ENCODE measurements at regions of chr7 and their contacts with region 1.

Region 1: GRCh38 chr7:80047856-80048459 is 86.7 kb upstream of the GNAI1 start:
- DNase-seq: peak; percentile 34
- ATAC-seq: peak; percentile 82
- H3K4me3 ChIP-seq: no peak overlapping the region
- H3K27ac ChIP-seq: no peak overlapping the region
- H3K4me1 ChIP-seq: no peaks in the 10 kb centered on the region
- H3K27me3 ChIP-seq: no peaks in the 10 kb centered on the region
- CTCF ChIP-seq: peak; percentile 65
- POLR2A ChIP-seq: no peak
- RAD21 ChIP-seq: peak; percentile 69

Region 2: DNA sequence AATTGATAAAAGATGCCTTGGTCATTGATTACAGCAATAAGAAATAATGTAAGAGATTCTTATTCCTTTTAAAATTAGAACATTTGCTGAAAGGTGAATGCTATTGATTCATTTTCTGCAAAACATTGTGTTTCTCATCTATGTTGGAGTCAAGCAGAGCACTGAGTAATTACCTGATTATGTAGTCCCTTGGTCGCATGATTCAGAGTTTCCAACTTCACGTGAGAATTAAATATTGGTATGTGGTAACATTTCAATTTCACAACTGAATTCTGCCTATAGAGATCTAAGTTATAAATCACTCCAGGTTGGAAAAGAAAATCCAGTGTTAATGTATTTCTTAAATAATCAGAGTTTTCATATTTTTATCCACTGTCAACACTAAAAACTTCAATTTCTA is 1548.0 kb before region 1 on chr7:
- CTCF ChIA-PET with region 1: no interaction called
- POLR2A ChIA-PET with region 1: no interaction called
- dilution Hi-C with region 1: no loop called
- in situ Hi-C with region 1: loop called (anchors 10 kb)
- intact Hi-C with region 1: no loop called
- DNase-seq: peak; percentile 44
- ATAC-seq: no peak
- H3K4me3 ChIP-seq: no peak overlapping the region
- H3K27ac ChIP-seq: no peak overlapping the region
- H3K4me1 ChIP-seq: no peaks in the 10 kb centered on the region
- H3K27me3 ChIP-seq: no peaks in the 10 kb centered on the region
- CTCF ChIP-seq: no peak
- POLR2A ChIP-seq: no peak
- RAD21 ChIP-seq: no peak

Region 3: DNA sequence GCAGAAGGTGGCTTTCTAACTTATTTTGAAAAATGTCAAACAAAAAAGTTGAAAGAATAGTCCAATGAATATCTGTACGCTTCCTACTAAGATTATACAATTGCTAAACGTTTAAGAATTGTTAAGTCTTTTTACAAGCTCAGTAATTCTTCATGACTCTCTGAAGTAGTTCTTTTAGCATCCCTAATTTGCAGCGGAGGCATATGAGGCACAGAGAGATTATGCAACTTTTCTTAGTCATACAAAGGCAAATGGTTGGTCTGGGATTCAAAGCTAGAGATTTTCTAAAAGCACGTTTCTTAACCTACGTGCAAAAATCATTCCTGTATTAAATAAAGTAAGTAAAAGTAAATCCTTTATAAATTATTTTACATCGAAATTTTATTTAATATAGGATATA is 848.7 kb before region 1 on chr7:
- CTCF ChIA-PET with region 1: no interaction called
- POLR2A ChIA-PET with region 1: no interaction called
- dilution Hi-C with region 1: no loop called
- in situ Hi-C with region 1: no loop called
- intact Hi-C with region 1: loop called (anchors 5 kb)
- DNase-seq: peak; percentile 69
- ATAC-seq: no peak
- H3K4me3 ChIP-seq: no peak overlapping the region
- H3K27ac ChIP-seq: no peak overlapping the region
- H3K4me1 ChIP-seq: peaks cover 4% of the 10 kb centered on the region
- H3K27me3 ChIP-seq: no peaks in the 10 kb centered on the region
- CTCF ChIP-seq: no peak
- POLR2A ChIP-seq: no peak
- RAD21 ChIP-seq: no peak

Region 4: DNA sequence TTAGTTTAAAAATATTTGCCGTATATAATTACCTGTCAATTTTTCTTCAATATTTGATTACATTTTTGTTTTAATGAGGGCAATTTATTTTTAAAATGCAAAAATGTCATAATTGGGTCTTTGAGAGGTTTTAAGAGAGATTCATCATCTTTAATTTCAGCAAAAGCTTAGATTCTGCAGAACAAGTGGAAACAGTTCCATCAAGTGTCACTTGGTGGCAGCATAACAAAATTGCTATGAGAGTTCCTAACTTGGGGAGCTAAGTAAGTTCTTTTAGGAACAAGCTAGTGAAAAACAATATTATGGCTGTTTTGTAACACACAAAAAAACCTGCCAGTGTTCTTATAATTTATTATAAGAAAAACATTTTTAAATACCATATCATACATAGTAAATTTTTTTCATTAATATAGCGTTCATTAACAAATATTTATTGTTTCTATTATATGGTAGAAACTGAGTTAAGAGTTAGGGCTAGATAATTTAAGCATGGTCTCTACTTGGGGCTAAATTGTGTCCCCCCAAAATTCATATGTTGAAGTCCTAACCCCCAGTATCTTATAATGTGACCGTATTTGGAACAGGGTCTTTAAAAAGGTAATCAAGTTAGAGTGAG is 749.7 kb before region 1 on chr7:
- CTCF ChIA-PET with region 1: interaction called, 8 read pairs
- POLR2A ChIA-PET with region 1: no interaction called
- dilution Hi-C with region 1: no loop called
- in situ Hi-C with region 1: loop called (anchors 5 kb)
- intact Hi-C with region 1: loop called (anchors 5 kb)
- DNase-seq: peak; percentile 79
- ATAC-seq: peak; percentile 65
- H3K4me3 ChIP-seq: no peak overlapping the region
- H3K27ac ChIP-seq: no peak overlapping the region
- H3K4me1 ChIP-seq: peaks cover 3% of the 10 kb centered on the region; the same call in 1 of the 2 replicates
- H3K27me3 ChIP-seq: no peaks in the 10 kb centered on the region
- CTCF ChIP-seq: peak; percentile 70
- POLR2A ChIP-seq: no peak
- RAD21 ChIP-seq: peak; percentile 73

Region 5: GRCh38 chr7:79806161-79806734 is 241.7 kb before region 1 on chr7:
- CTCF ChIA-PET with region 1: no interaction called
- POLR2A ChIA-PET with region 1: no interaction called
- dilution Hi-C with region 1: no loop called
- in situ Hi-C with region 1: no loop called
- intact Hi-C with region 1: loop called (anchors 1 kb)
- DNase-seq: peak; percentile 42
- ATAC-seq: peak; percentile 60
- H3K4me3 ChIP-seq: no peak overlapping the region
- H3K27ac ChIP-seq: no peak overlapping the region
- H3K4me1 ChIP-seq: no peaks in the 10 kb centered on the region; the same call in 1 of the 2 replicates
- H3K27me3 ChIP-seq: no peaks in the 10 kb centered on the region
- CTCF ChIP-seq: peak; percentile 60
- POLR2A ChIP-seq: no peak
- RAD21 ChIP-seq: peak; percentile 73

Region 6: DNA sequence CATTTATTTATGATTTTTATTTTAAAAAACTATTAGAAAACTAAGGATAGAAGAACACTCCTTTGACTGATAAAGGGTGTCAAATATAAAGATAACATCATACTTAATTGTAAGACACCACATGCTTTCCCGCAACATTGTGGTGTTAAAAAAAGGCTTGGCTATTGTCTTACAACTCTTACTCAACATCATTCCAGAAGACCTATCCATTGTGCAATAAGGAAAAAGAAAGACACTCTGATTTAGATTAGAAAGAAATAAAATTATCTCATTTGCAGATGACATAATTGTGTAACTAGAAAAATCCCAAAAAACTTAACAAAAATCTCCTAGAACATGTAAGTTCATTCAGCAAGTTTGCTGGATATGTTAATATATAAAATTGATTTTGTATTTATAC is 210.0 kb before region 1 on chr7:
- CTCF ChIA-PET with region 1: no interaction called
- POLR2A ChIA-PET with region 1: no interaction called
- dilution Hi-C with region 1: no loop called
- in situ Hi-C with region 1: no loop called
- intact Hi-C with region 1: no loop called
- DNase-seq: no peak
- ATAC-seq: no peak
- H3K4me3 ChIP-seq: no peak overlapping the region
- H3K27ac ChIP-seq: no peak overlapping the region
- H3K4me1 ChIP-seq: no peaks in the 10 kb centered on the region
- H3K27me3 ChIP-seq: no peaks in the 10 kb centered on the region
- CTCF ChIP-seq: no peak
- POLR2A ChIP-seq: no peak
- RAD21 ChIP-seq: no peak

Measured in IMR-90 (cell line).